HEK293 (cell line): ENCODE measurements at regions of chr11 and their contacts with region 1.

Region 1: GRCh38 chr11:1694064-1694845 is 2.7 kb upstream of the KRTAP5-6 start:
- H3K4me3 ChIP-seq: no peak overlapping the region
- H3K27ac ChIP-seq: no peak overlapping the region
- H3K4me1 ChIP-seq: no peaks in the 10 kb centered on the region
- CTCF ChIP-seq: peak; percentile 91

Region 2: DNA sequence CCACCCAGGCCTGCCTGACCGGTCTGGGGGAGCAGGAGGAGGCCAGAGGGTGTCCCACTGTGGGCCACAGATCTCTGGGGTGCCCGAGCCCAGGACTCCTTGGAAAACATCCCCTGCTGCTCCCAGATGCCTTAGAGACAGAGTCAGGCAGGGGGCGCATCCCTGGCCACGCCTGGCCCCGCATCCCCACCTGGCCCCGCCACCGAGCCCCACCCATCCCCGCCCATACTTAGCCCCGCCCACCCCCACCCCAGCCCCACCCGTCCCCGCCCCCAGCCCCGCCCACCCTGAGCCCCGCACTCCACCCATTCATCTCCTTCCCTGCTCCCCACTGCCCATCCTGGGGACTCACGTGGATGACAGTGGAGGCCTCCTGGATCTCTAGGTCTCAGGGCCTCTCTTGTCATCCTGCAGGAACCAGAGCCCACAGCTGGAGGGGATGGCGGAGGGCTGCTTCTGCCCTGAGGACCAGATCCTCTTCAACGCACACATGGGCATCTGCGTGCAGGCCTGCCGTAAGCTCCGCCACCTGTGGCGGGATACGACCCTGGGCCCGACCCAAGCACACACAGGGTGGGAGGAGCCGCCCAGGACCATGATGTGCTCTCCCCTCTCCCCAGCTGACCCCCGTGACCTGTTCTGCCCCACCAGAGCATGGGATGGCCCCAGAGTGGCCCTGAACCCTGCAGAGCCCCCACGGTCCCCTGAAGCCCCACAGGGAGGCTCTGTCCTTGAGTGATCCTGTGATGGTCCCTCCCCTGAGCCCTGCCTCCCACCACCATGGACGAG is 437.8 kb before region 1 on chr11:
- CTCF ChIA-PET with region 1: no interaction called
- POLR2A ChIA-PET with region 1: no interaction called
- H3K4me3 ChIP-seq: no peak overlapping the region
- H3K27ac ChIP-seq: no peak overlapping the region
- H3K4me1 ChIP-seq: no peaks in the 10 kb centered on the region
- CTCF ChIP-seq: no peak

Region 3: DNA sequence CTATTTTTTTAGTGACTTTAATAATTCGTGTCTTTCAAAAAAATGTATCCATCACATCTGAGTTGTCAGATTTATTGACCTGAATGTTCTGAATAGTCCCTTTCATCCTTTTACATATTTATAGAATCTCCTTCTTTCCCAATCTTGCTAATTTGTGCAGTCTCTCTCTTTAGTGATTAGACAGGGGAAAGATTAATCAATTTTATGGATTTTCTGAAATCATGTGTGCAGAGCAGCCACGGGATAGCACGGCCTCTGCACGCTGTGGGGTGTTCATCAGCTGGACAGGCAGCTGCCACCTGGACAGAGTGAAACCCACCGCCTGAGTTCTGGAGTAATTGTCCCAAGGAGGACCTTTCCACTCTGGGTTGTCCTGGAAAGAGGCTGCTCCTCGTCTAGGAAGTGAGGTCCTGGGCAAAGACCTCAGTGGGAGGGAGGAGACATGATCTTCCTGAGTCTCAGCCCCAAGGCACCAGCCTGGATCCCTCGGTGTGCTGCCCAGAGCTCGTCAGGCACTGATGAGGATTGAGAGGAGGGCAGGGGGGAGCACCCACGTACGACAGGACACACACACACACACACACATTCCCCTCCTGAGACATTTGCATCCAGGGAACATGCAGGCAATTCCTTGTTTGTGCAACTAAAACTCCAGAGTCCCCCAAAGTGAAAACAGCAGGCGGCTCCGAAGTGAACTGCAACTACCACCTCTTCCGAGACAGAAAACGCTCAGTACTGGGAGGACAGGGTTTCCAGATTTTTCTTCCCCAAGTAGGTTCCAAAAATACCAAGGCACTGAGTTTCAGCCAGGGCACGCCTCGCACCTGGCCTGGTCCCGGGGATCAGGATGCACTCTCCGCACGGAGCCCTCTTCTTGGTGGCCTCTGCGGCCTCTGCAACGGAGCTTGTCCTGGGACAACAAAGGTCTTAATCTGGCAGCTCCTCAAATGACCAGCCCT is 19.8 kb before region 1 on chr11:
- CTCF ChIA-PET with region 1: interaction called, 18 read pairs
- POLR2A ChIA-PET with region 1: no interaction called
- H3K4me3 ChIP-seq: no peak overlapping the region
- H3K27ac ChIP-seq: no peak overlapping the region
- H3K4me1 ChIP-seq: no peaks in the 10 kb centered on the region
- CTCF ChIP-seq: no peak

Region 4: DNA sequence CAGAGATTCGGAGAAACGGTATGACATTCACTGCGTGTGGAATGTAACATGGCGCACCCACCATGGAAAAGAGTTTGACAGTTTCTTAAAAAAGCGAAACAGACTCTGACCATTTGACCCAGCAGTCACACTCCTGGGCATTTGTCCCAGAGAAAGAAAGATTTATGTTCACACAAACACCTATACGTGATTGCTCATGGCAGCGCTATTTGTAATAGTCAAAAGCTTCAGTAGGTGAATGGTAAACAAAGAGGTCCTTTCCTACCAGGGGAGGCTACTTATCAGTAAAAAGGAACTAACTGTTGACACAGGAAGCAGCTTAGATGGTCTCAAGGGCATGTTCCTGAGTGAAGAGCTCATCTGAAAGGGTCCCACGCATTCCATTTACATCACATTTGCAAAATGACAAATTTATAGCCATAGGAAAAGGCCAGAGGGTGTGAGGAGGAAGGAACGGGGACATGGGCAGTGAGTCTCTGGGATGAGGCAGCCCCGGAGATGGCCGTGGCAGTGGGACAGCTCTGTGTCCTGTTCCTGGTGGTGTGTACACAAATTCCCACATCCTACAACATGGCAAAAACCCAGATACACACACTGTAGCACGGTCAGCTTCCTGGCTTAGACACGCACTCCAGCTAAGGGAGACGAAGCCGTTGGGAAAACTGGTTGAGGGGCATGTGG is 11.9 kb before region 1 on chr11:
- CTCF ChIA-PET with region 1: interaction called, 35 read pairs
- POLR2A ChIA-PET with region 1: no interaction called
- H3K4me3 ChIP-seq: no peak overlapping the region
- H3K27ac ChIP-seq: no peak overlapping the region
- H3K4me1 ChIP-seq: no peaks in the 10 kb centered on the region
- CTCF ChIP-seq: no peak

Region 5: DNA sequence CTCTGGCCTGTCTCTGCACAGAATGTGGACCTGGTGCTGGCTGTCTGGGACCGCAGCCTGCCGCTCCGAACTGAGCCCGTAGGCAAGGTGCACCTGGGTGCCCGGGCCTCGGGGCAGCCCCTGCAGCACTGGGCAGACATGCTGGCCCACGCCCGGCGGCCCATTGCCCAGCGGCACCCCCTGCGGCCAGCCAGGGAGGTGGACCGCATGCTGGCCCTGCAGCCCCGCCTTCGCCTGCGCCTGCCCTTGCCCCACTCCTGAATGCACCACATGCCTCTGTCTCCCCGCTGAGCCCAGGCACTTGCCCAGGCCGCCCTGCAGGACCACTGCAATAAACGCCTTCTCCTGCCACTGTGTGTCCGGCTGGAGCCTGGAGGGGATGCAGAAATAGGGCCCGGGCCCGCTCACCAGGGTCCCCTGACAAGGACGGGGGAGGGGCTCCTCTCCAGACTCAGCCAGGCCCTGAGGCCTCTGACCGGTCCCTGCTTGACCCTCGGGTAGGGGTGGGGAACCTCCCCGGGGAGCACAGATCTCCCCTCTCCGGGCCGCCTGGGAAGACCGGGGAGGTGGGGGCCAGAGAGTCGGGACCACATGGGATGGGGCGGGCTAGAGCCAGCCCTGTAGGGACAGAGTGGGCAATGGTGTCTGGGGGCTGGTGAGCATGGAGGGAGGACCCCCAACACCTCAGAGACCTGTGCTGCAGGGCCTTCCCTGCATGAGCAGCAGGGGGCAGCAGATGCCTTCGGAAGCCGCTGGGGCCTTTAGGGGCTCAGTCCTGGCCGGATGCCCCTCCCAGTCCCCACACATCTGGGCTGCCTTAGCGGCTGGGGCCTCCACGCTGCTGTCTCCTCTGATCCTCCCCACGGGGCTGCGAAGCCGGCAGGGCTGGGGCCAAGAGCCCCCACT is 143.2 kb after region 1 on chr11:
- CTCF ChIA-PET with region 1: interaction called, 261 read pairs
- POLR2A ChIA-PET with region 1: interaction called, 16 read pairs
- H3K4me3 ChIP-seq: no peak overlapping the region
- H3K27ac ChIP-seq: no peak overlapping the region
- H3K4me1 ChIP-seq: no peaks in the 10 kb centered on the region
- CTCF ChIP-seq: peak; percentile 59

Region 6: GRCh38 chr11:1845561-1846452 is 151.6 kb after region 1 on chr11:
- CTCF ChIA-PET with region 1: interaction called, 17 read pairs
- POLR2A ChIA-PET with region 1: no interaction called
- H3K4me3 ChIP-seq: no peak overlapping the region
- H3K27ac ChIP-seq: no peak overlapping the region
- H3K4me1 ChIP-seq: no peaks in the 10 kb centered on the region
- CTCF ChIP-seq: no peak

Region 7: GRCh38 chr11:1882519-1883238 is 188.4 kb after region 1 on chr11:
- CTCF ChIA-PET with region 1: interaction called, 32 read pairs
- POLR2A ChIA-PET with region 1: no interaction called
- H3K4me3 ChIP-seq: no peak overlapping the region
- H3K27ac ChIP-seq: no peak overlapping the region
- H3K4me1 ChIP-seq: no peaks in the 10 kb centered on the region
- CTCF ChIP-seq: peak; percentile 82

Region 8: DNA sequence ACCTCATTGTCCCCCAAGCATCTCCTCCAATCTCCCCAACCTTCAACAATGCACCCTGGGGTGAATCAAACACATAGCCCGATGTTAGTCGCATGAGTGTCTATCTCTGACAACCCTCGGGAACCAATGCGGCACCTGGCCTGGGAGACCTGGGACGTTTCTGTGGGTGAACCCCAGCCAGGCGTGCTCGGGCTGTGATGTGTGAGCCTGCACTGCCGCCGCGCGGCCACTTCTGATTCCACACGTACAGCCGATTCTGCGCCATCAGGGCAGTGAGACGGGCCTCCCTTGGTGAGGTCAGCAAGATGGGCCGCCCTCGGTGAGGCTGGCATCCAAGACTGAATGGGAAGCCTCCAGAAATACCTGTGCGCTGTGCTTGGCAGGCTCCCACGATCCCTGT is 308.6 kb after region 1 on chr11:
- CTCF ChIA-PET with region 1: interaction called, 26 read pairs
- POLR2A ChIA-PET with region 1: no interaction called
- H3K4me3 ChIP-seq: no peak overlapping the region
- H3K27ac ChIP-seq: no peak overlapping the region
- H3K4me1 ChIP-seq: no peaks in the 10 kb centered on the region
- CTCF ChIP-seq: no peak